T-cell (primary cell): ENCODE measurements at regions of chr17 and their contacts with region 1.

Region 1: DNA sequence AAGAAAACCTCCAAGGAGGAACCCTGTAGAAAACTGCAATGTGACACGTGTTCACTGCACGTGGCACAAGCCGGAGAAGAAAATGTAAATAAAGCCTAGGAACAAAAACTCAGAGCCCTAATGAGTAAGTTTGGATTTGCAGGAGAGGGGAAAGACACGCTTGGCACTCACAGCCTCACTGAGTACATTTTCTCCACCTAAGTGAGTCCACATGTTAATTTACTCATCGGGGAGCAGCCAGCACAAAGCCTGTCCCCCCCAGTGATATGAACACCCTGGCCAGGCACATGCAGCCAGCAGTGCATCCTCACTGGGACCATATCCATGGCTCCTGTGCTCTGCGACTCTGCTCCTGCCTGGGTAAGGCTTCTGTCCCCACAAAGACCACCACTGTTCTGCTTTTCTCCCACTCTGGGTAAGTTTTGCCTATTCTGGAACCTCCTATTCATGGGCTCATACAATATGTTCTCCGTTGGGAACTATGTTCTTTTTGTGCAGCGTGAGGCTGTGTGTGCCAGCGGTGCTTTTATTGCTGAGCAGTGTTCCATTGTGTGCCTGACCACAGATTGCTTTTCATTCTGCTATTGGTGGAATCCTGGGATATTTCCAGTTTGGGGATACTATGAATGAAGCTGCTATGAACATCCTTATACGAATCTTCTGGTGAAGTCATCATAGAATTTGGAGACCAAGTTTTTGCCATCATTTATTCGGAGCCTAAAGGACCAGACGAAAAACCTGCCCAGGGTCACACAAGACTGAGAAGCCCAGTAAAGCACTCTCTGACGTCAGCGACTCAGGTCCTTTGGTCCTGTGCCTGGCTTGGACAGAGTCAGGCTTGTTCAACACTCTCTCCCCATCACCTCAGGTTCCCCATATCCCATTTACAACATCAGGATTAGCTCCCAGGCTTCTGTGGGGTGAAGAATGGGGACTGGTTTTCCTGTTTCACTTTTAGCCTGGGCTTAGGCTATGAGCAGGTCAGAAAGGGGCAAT is 53.3 kb downstream of the RNF112 start:
- DNase-seq: no peak
- ATAC-seq: no peak
- H3K4me3 ChIP-seq: no peak overlapping the region
- H3K4me3 Mint-ChIP-seq: peak overlapping the region in 1 of 3 donors; percentile 67
- H3K27ac ChIP-seq: peak overlapping the region; percentile 62
- H3K27ac Mint-ChIP-seq: peak overlapping the region; percentile 95 to 97
- H3K4me1 ChIP-seq: peaks cover 18 to 42% of the 10 kb centered on the region in 2 experiments
- H3K4me1 Mint-ChIP-seq: peaks cover 40 to 48% (median 46%) of the 10 kb centered on the region in 3 donors
- H3K27me3 ChIP-seq: no peaks in the 10 kb centered on the region
- H3K27me3 Mint-ChIP-seq: no peaks in the 10 kb centered on the region

Region 2: DNA sequence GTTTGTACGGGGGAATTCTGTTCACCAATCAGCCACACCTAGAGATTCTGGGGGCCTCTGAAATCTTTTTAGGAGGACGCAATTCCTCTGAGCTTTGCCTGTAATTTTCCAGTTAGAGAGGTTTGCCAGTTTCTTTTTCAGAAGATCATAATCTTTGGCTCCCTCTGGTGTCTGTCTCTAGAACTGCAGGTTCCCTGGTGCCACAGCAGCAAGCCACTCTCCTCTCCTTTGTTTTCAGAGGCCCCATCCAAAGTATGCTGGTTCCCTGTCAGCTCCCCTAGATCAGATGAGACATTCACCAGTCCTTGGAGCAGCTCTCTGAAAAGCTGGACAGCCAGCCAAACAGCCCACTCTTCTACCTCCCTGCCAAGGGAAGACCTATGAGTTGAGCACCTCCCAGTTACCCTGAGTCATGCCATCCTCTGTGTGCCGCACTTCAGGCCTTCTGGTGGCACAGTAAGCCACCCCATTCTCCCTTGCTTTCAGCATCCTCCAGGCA is 17.2 kb before region 1 on chr17:
- CTCF ChIA-PET with region 1: no interaction called
- POLR2A ChIA-PET with region 1: no interaction called
- DNase-seq: peak in 33 of 35 experiments; percentile 16 to 83 (median 47)
- ATAC-seq: peak in 3 of 4 experiments; percentile 50 to 73 (median 54)
- H3K4me3 ChIP-seq: no peak overlapping the region
- H3K4me3 Mint-ChIP-seq: no peak overlapping the region
- H3K27ac ChIP-seq: no peak overlapping the region
- H3K27ac Mint-ChIP-seq: no peak overlapping the region
- H3K4me1 ChIP-seq: no peaks in the 10 kb centered on the region
- H3K4me1 Mint-ChIP-seq: peaks cover 3 to 5% (median 4%) of the 10 kb centered on the region in 3 donors
- H3K27me3 ChIP-seq: peaks cover 0 to 16% of the 10 kb centered on the region in 2 experiments
- H3K27me3 Mint-ChIP-seq: peaks cover 18 to 23% of the 10 kb centered on the region in 2 donors

Region 3: DNA sequence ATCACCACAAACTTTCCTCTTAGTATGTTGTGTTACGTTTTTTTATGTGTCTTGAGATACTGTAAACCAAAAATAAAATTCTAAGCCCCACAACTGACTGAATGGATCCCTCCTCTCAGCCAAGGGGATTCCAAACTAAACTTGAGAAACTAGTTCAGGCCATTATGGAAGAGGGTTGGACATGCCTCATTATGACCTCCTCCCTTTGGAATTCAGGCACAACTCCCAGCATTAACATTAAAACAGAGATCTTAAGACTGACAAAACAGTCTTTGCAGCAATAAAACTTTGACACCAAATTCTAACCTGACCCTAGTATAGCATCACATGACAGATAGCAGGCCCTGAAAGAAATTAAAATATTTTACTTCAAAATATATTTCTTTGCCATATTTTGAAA is 18.2 kb after region 1 on chr17:
- CTCF ChIA-PET with region 1: no interaction called
- POLR2A ChIA-PET with region 1: interaction called in 1 of 2 experiments, 10 read pairs
- DNase-seq: no peak
- ATAC-seq: no peak
- H3K4me3 ChIP-seq: no peak overlapping the region
- H3K4me3 Mint-ChIP-seq: no peak overlapping the region
- H3K27ac ChIP-seq: no peak overlapping the region
- H3K27ac Mint-ChIP-seq: no peak overlapping the region
- H3K4me1 ChIP-seq: no peaks in the 10 kb centered on the region
- H3K4me1 Mint-ChIP-seq: no peaks in the 10 kb centered on the region
- H3K27me3 ChIP-seq: peaks cover 0 to 3% of the 10 kb centered on the region in 2 experiments
- H3K27me3 Mint-ChIP-seq: peaks cover 3 to 10% of the 10 kb centered on the region in 2 donors

Region 4: GRCh38 chr17:21425736-21426135 is 1961.4 kb after region 1 on chr17:
- CTCF ChIA-PET with region 1: no interaction called
- POLR2A ChIA-PET with region 1: no interaction called
- DNase-seq: no peak
- ATAC-seq: no peak
- H3K4me3 ChIP-seq: no peak overlapping the region
- H3K4me3 Mint-ChIP-seq: no peak overlapping the region
- H3K27ac ChIP-seq: no peak overlapping the region
- H3K27ac Mint-ChIP-seq: no peak overlapping the region
- H3K4me1 ChIP-seq: peaks cover under 1 to 9% of the 10 kb centered on the region in 2 experiments
- H3K4me1 Mint-ChIP-seq: peaks cover 3 to 13% (median 4%) of the 10 kb centered on the region in 3 donors
- H3K27me3 ChIP-seq: peaks cover 0 to 18% of the 10 kb centered on the region in 2 experiments
- H3K27me3 Mint-ChIP-seq: peaks cover 0 to 3% of the 10 kb centered on the region in 2 donors